Panc1 (cell line): ENCODE measurements at regions of chr1 and their contacts with region 1.

Region 1: GRCh38 chr1:6794164-6794563 is 8.9 kb downstream of the CAMTA1 start:
- DNase-seq: no peak
- ATAC-seq: no peak
- H3K4me3 ChIP-seq: no peak overlapping the region
- H3K27ac ChIP-seq: no peak overlapping the region
- H3K4me1 ChIP-seq: 0 out of 2 replicates have a peak, but pooled peaks cover 3% of the 10 kb centered on the region
- H3K27me3 ChIP-seq: no peaks in the 10 kb centered on the region
- CTCF ChIP-seq: no peak; the same call in 1 of the 2 replicates

Region 2: GRCh38 chr1:6235296-6235677 is 558.9 kb before region 1 on chr1:
- CTCF ChIA-PET with region 1: no interaction called
- POLR2A ChIA-PET with region 1: no interaction called
- in situ Hi-C with region 1: no loop called
- intact Hi-C with region 1: no loop called
- DNase-seq: no peak
- ATAC-seq: peak; percentile 4; the same call in 1 of the 2 replicates
- H3K4me3 ChIP-seq: peak overlapping the region; percentile 62 to 84
- H3K27ac ChIP-seq: peak overlapping the region; percentile 84
- H3K4me1 ChIP-seq: peaks cover 6% of the 10 kb centered on the region
- H3K27me3 ChIP-seq: no peaks in the 10 kb centered on the region
- CTCF ChIP-seq: no peak

Region 3: DNA sequence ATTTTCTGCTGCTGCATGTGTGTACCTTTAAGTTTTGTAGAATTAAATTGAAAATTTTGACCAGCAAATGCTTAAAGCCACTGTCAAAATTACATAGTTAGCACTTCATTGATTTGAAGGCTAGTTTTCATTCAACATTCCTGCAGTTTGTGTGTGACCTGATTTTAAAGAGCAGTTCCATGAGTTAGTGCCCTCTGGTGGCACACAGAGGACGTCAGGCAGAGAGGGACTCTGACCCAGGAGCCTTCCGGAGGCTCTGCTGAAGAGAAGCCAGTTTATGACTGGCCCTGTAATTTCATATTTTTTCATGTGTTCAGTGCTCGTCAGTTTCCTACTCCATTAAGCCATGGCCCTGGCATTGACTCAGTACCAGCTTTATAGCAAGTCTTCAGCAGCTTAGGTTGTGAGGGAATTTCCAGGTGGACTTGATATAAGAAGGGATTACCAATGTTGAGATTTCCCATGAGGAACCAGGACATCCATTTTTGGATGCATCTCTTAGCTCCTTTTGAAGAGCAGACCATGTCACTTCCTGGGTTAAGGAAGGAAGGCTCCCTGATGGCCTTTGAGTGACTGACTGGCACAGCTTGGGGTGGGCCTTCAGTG is 95.8 kb after region 1 on chr1:
- CTCF ChIA-PET with region 1: no interaction called
- POLR2A ChIA-PET with region 1: no interaction called
- in situ Hi-C with region 1: no loop called
- intact Hi-C with region 1: loop called (anchors 5 kb)
- DNase-seq: peak; percentile 39
- ATAC-seq: peak; percentile 90
- H3K4me3 ChIP-seq: no peak overlapping the region
- H3K27ac ChIP-seq: no peak overlapping the region
- H3K4me1 ChIP-seq: no peaks in the 10 kb centered on the region
- H3K27me3 ChIP-seq: no peaks in the 10 kb centered on the region
- CTCF ChIP-seq: peak; percentile 88

Region 4: DNA sequence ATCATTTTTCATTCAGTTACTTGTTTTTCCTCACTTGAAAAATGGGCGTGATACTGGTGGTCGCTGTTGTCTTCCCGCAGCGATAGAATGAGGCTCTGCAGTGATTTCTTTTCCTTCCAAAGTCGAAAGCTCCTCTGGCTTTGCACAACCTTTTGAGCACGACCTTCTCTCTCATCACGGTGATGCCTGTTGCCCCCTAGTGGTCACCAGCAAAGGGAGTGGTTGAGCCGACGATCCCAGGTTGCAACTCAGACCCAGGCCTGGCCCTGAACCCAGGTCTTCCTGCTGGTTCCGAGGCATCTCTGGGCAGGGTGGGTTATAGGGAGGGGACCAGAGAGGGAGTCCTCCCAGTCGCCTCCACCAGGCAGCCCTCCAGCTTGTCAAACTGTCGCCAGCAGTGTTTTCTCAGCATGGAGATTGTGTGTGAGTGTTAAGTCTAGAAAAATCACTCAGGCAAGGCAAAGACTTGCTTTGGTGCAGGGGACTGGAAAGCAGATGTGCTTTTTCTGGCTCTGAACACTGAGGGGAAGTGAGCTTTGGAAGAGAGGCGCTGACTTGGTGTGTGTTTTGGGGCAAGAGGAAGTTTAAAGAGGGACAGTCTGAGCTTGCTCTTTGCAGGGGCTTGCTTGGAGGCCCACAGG is 276.3 kb after region 1 on chr1:
- CTCF ChIA-PET with region 1: interaction called, 3 read pairs
- POLR2A ChIA-PET with region 1: no interaction called
- in situ Hi-C with region 1: no loop called
- intact Hi-C with region 1: loop called (anchors 5 kb)
- DNase-seq: peak; percentile 54
- ATAC-seq: peak; percentile 95
- H3K4me3 ChIP-seq: peak overlapping the region in 1 of 2 experiments; percentile 14; a peak in 1 of 4 replicates
- H3K27ac ChIP-seq: no peak overlapping the region
- H3K4me1 ChIP-seq: no peaks in the 10 kb centered on the region
- H3K27me3 ChIP-seq: peaks cover 12% of the 10 kb centered on the region
- CTCF ChIP-seq: peak; percentile 96

Region 5: GRCh38 chr1:7218210-7218832 is 424.2 kb after region 1 on chr1:
- CTCF ChIA-PET with region 1: no interaction called
- POLR2A ChIA-PET with region 1: no interaction called
- in situ Hi-C with region 1: no loop called
- intact Hi-C with region 1: loop called (anchors 5 kb)
- DNase-seq: no peak
- ATAC-seq: no peak
- H3K4me3 ChIP-seq: no peak overlapping the region
- H3K27ac ChIP-seq: no peak overlapping the region
- H3K4me1 ChIP-seq: no peaks in the 10 kb centered on the region
- H3K27me3 ChIP-seq: no peaks in the 10 kb centered on the region
- CTCF ChIP-seq: peak; percentile 88